Vagina (tissue), 2 donors: ENCODE measurements at regions of chr9 and their contacts with region 1.

Region 1: GRCh38 chr9:130682490-130683121 is 11.0 kb upstream of the EXOSC2 start:
- DNase-seq: no peak
- H3K4me3 ChIP-seq: peak overlapping the region; percentile 47 to 69
- H3K27ac ChIP-seq: no peak overlapping the region
- H3K4me1 ChIP-seq: peaks cover 17% of the 10 kb centered on the region
- H3K27me3 ChIP-seq: no peaks in the 10 kb centered on the region
- CTCF ChIP-seq: peak; percentile 72 to 83 (median 80)
- POLR2A ChIP-seq: no peak

Region 2: GRCh38 chr9:130461218-130461630 is 221.4 kb before region 1 on chr9:
- intact Hi-C with region 1: loop called (anchors 2 kb)
- DNase-seq: no peak
- H3K4me3 ChIP-seq: no peak overlapping the region
- H3K27ac ChIP-seq: no peak overlapping the region
- H3K4me1 ChIP-seq: no peaks in the 10 kb centered on the region
- H3K27me3 ChIP-seq: no peaks in the 10 kb centered on the region
- CTCF ChIP-seq: peak; percentile 78 to 86 (median 83)
- POLR2A ChIP-seq: no peak

Region 3: GRCh38 chr9:130834371-130835311 is 152.0 kb after region 1 on chr9 and contains the start of gene ABL1:
- intact Hi-C with region 1: no loop called
- DNase-seq: no peak
- H3K4me3 ChIP-seq: peak within 1 kb of the TSS; percentile 73 to 77
- H3K27ac ChIP-seq: peak within 1 kb of the TSS; percentile 91
- H3K4me1 ChIP-seq: peaks cover 63% of the 10 kb centered on the region
- H3K27me3 ChIP-seq: no peaks in the 10 kb centered on the region
- CTCF ChIP-seq: no peak
- POLR2A ChIP-seq: no peak
- total RNA-seq, gene ABL1: 68.5 TPM